ENCODE measurements at regions of chr6 and their contacts with region 1.

Region 1: DNA sequence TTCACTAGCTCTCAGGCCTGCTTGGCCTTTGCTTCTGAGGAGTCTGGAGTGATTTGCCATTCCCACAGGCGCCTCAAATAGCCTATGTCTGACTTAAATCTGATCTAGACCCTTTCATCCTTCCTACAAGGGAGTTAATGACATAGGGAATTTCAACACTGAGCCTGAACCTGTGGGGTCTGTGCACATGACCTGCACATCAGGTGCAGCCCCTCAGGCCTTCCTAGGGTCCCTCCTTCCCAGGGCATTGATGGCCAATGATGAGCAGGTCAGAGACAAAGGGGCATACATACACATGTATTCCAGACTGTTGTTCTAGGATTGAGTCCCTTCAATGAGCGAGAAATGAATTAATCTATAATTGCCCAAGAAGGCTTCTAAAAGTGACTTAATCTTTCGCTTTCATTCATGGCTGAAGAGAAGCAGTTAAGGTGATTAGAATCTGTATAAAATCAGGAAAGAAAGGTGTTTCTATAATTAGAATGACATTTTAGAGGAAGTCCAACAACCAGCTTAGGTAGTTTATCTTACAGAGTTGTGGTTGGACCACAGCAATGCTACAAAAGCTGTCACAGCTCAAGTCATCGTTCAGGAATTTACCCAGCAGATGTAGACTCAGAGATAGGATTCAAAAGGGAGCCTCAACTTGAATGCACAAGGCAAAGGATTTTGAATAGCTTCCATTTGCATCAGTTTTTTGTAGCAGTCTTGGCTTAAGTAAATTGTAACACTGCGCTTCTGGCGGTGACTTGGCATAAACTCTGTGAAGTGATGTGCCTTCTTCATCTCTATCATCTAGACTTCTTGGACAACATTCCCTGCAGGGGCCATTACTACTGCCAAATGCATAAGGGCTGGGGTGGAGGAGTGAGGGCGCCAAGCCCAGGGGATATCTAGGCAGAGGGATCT is 27.0 kb upstream of the TBC1D7 start:
- DNase-seq: peak; percentile 58
- ATAC-seq: peak; percentile 66
- H3K4me3 Mint-ChIP-seq: peak overlapping the region; percentile 68
- H3K27ac Mint-ChIP-seq: peak overlapping the region; percentile 95
- H3K4me1 Mint-ChIP-seq: peaks cover 46% of the 10 kb centered on the region
- H3K27me3 Mint-ChIP-seq: no peaks in the 10 kb centered on the region
- CTCF ChIP-seq: no peak

Region 2: DNA sequence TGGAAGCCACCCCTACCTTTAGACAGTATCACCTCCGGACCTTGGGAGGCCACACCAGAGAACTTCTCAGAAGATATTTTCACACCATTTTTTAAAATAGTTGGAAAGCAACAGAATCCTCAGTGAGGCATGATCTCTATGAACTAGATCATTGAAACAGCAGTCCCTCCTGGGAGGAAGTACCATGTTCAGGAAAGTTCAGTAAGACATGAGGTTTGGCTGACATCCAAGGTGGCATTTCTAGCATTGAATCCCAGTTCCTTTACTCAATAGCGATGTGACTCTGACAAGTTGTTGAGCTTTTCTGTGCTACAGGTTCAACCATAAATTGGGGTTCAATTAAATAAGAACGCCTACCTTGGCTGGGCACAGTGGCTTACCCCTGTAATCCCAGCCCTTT is 196.0 kb before region 1 on chr6:
- CTCF ChIA-PET with region 1: no interaction called
- POLR2A ChIA-PET with region 1: no interaction called
- intact Hi-C with region 1: no loop called
- DNase-seq: no peak
- ATAC-seq: no peak
- H3K4me3 Mint-ChIP-seq: no peak overlapping the region
- H3K27ac Mint-ChIP-seq: no peak overlapping the region
- H3K4me1 Mint-ChIP-seq: no peaks in the 10 kb centered on the region
- H3K27me3 Mint-ChIP-seq: no peaks in the 10 kb centered on the region
- CTCF ChIP-seq: no peak

Region 3: GRCh38 chr6:13336553-13336952 is 18.7 kb before region 1 on chr6:
- CTCF ChIA-PET with region 1: interaction called, 14 read pairs
- POLR2A ChIA-PET with region 1: interaction called, 3 read pairs
- intact Hi-C with region 1: no loop called
- DNase-seq: peak; percentile 88
- ATAC-seq: peak; percentile 86
- H3K4me3 Mint-ChIP-seq: no peak overlapping the region
- H3K27ac Mint-ChIP-seq: no peak overlapping the region
- H3K4me1 Mint-ChIP-seq: peaks cover 4% of the 10 kb centered on the region
- H3K27me3 Mint-ChIP-seq: no peaks in the 10 kb centered on the region
- CTCF ChIP-seq: peak; percentile 97

Region 4: GRCh38 chr6:13373488-13373886 is 18.2 kb after region 1 on chr6:
- CTCF ChIA-PET with region 1: interaction called, 10 read pairs
- POLR2A ChIA-PET with region 1: interaction called, 5 read pairs
- intact Hi-C with region 1: no loop called
- DNase-seq: no peak
- ATAC-seq: no peak
- H3K4me3 Mint-ChIP-seq: no peak overlapping the region
- H3K27ac Mint-ChIP-seq: no peak overlapping the region
- H3K4me1 Mint-ChIP-seq: peaks cover 33% of the 10 kb centered on the region
- H3K27me3 Mint-ChIP-seq: no peaks in the 10 kb centered on the region
- CTCF ChIP-seq: no peak

Region 5: DNA sequence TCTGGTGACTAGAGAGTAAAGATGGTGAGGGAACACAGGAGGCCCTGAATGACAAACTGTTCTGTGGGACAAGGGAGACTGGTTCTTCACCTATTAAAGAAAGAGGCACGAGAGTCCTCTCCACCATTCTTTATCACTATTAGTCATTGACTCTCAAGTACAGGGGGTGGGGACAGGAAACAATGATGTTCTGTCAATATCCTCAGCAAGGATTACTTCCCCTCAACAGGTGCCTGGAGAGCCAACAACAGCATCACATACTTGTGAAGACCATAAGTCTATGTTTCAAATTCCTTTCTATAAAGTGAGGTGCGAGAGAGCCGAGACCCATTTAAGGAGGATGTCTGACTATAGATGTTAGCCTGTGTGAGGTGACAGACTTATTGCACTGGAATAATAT is 45.5 kb after region 1 on chr6:
- CTCF ChIA-PET with region 1: no interaction called
- POLR2A ChIA-PET with region 1: no interaction called
- intact Hi-C with region 1: no loop called
- DNase-seq: no peak
- ATAC-seq: peak; percentile 77
- H3K4me3 Mint-ChIP-seq: no peak overlapping the region
- H3K27ac Mint-ChIP-seq: no peak overlapping the region
- H3K4me1 Mint-ChIP-seq: peaks cover 10% of the 10 kb centered on the region
- H3K27me3 Mint-ChIP-seq: no peaks in the 10 kb centered on the region
- CTCF ChIP-seq: no peak

Region 6: GRCh38 chr6:13427801-13428582 is 72.7 kb after region 1 on chr6:
- CTCF ChIA-PET with region 1: interaction called, 5 read pairs
- POLR2A ChIA-PET with region 1: interaction called, 3 read pairs
- intact Hi-C with region 1: loop called (anchors 5 kb)
- DNase-seq: peak; percentile 94
- ATAC-seq: peak; percentile 78
- H3K4me3 Mint-ChIP-seq: peak overlapping the region; percentile 54
- H3K27ac Mint-ChIP-seq: peak overlapping the region; percentile 97
- H3K4me1 Mint-ChIP-seq: peaks cover 82% of the 10 kb centered on the region
- H3K27me3 Mint-ChIP-seq: no peaks in the 10 kb centered on the region
- CTCF ChIP-seq: peak; percentile 47

Region 7: GRCh38 chr6:13454286-13455221 is 99.3 kb after region 1 on chr6:
- CTCF ChIA-PET with region 1: interaction called, 3 read pairs
- POLR2A ChIA-PET with region 1: interaction called, 3 read pairs
- intact Hi-C with region 1: loop called (anchors 2 kb)
- DNase-seq: peak; percentile 91
- ATAC-seq: peak; percentile 62
- H3K4me3 Mint-ChIP-seq: peak overlapping the region; percentile 9
- H3K27ac Mint-ChIP-seq: peak overlapping the region; percentile 87
- H3K4me1 Mint-ChIP-seq: peaks cover 71% of the 10 kb centered on the region
- H3K27me3 Mint-ChIP-seq: no peaks in the 10 kb centered on the region
- CTCF ChIP-seq: no peak